ENCODE measurements at regions of chr10 and their contacts with region 1.

Region 1: DNA sequence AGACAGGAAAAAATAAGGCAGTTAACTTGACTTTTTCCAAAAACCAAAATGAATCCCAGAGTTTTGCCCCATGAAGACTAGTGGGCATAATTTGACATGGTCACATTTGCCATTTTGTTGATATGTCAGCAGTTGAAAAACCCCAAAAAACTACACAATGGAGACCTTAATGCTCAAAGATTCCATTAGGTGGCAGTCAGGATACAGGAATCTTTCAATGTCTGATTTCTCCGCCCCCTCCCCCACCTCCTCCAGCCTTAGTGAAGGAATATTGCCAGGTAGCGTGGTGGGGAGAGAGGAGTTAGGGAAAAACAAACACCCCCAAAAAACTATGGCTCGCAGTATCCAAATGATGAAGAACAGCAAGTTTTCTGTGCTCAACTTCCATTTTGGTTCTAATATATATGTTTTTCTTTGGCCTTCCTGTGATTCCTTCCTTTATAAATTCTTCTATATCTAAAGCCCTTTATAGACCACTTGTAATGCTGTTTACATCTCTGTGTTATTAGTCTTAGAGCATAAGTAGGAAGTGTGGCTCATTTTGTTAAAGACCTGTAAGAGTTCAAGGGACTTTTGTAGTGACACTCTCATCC is 6.7 kb upstream of the SMNDC1 start:
- DNase-seq: peak; percentile 74
- H3K4me3 Mint-ChIP-seq: no peak overlapping the region
- H3K27ac Mint-ChIP-seq: no peak overlapping the region
- H3K4me1 Mint-ChIP-seq: peaks cover 34% of the 10 kb centered on the region
- H3K27me3 Mint-ChIP-seq: no peaks in the 10 kb centered on the region

Region 2: GRCh38 chr10:110414563-110415309 is 103.3 kb after region 1 on chr10:
- intact Hi-C with region 1: loop called (anchors 2 kb)
- DNase-seq: peak; percentile 95
- H3K4me3 Mint-ChIP-seq: peak overlapping the region; percentile 39
- H3K27ac Mint-ChIP-seq: peak overlapping the region; percentile 94
- H3K4me1 Mint-ChIP-seq: peaks cover 62% of the 10 kb centered on the region
- H3K27me3 Mint-ChIP-seq: no peaks in the 10 kb centered on the region

Region 3: DNA sequence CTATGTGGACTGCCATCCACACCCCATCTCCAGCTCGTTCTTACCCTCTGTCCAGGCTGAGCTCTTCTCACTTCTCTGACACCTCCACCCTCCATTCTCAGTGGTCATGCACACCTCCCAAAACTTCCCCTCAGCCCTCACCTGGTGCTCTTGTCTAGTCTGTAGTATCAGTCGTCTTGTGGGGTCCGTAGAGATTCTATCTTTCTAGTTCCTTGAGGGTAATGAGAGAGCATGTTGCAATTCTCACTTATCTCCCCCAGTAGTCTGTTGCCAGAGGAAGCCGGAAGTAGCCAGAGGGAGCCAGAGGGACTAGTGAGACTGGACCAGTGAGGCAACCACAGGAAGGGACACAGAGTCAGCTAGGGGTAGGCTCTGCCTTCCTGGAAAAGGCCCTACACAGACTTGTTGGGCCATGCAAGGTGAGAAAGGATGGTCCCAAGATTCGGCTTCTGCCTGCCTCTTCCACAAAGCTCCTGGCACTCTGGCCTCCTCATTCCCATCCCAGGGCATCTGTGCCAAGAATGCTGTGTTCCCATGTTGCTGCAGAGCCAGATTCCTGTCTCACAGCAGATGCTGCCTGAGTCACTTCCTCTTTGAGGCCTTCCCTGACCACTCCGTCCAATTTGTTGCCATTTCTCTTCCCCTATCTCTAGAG is 135.6 kb after region 1 on chr10:
- intact Hi-C with region 1: no loop called
- DNase-seq: no peak
- H3K4me3 Mint-ChIP-seq: no peak overlapping the region
- H3K27ac Mint-ChIP-seq: peak overlapping the region; percentile 3
- H3K4me1 Mint-ChIP-seq: peaks cover 14% of the 10 kb centered on the region
- H3K27me3 Mint-ChIP-seq: peaks cover 14% of the 10 kb centered on the region

Region 4: GRCh38 chr10:110497438-110498086 is 186.1 kb after region 1 on chr10 and contains the start of gene DUSP5:
- intact Hi-C with region 1: loop called (anchors 1 kb)
- DNase-seq: peak; percentile 99
- H3K4me3 Mint-ChIP-seq: peak within 1 kb of the TSS; percentile 99
- H3K27ac Mint-ChIP-seq: peak within 1 kb of the TSS; percentile 92
- H3K4me1 Mint-ChIP-seq: peaks cover 47% of the 10 kb centered on the region
- H3K27me3 Mint-ChIP-seq: no peaks in the 10 kb centered on the region
- total RNA-seq, gene DUSP5: 76.0 and 79.9 TPM in 2 replicates

Region 5: GRCh38 chr10:110535958-110536891 is 224.8 kb after region 1 on chr10:
- intact Hi-C with region 1: loop called (anchors 1 kb)
- DNase-seq: peak; percentile 85
- H3K4me3 Mint-ChIP-seq: peak overlapping the region; percentile 38
- H3K27ac Mint-ChIP-seq: peak overlapping the region; percentile 84
- H3K4me1 Mint-ChIP-seq: peaks cover 55% of the 10 kb centered on the region
- H3K27me3 Mint-ChIP-seq: no peaks in the 10 kb centered on the region

Region 6: DNA sequence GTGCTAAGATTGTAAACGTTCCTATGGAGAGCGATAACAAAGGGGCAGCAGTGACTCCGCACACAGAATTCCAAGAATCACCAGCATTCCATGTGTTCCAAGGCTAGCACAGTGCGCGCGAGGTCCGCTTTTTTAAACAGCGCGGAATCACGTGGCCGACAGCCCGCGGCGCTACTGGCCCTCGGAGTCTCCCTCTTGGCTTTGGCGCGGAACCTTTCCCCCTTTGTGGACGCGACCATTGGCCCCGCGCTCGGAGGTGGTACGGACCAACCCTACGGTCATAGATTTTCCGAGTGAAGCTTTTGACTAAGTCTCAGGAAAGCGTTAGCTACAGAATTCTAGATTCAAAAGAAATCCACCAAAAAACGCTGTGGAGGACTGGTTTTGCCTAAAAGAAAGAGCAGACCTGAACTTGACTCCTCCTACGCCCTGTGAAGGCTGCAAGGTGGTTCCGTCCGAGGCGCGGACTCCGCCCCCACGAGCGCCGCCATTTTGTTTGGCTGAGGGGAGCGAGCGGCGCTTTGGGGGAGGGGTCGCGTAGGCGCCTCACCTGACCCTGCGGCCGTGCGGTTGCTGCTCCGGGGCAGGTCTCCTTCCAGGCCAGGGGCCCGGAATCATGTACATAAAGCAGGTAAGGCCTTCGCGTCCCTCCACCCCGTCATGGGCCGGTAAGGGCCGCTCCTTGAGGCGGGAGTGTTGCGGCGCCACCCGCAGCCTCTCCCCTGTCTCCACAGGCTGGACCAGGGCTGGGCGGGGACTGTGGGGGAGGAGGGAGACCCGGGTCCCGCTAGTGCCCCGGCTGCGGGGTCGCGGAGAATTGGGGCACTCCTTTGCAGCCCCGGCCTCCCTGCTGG is 256.0 kb after region 1 on chr10 and contains the start of gene SMC3:
- intact Hi-C with region 1: loop called (anchors 1 kb)
- DNase-seq: peak; percentile 98
- H3K4me3 Mint-ChIP-seq: peak within 1 kb of the TSS; percentile 97
- H3K27ac Mint-ChIP-seq: peak within 1 kb of the TSS; percentile 98
- H3K4me1 Mint-ChIP-seq: peaks cover 32% of the 10 kb centered on the region
- H3K27me3 Mint-ChIP-seq: peaks cover 21% of the 10 kb centered on the region
- total RNA-seq, gene SMC3: 82.2 and 87.3 TPM in 2 replicates

Region 7: DNA sequence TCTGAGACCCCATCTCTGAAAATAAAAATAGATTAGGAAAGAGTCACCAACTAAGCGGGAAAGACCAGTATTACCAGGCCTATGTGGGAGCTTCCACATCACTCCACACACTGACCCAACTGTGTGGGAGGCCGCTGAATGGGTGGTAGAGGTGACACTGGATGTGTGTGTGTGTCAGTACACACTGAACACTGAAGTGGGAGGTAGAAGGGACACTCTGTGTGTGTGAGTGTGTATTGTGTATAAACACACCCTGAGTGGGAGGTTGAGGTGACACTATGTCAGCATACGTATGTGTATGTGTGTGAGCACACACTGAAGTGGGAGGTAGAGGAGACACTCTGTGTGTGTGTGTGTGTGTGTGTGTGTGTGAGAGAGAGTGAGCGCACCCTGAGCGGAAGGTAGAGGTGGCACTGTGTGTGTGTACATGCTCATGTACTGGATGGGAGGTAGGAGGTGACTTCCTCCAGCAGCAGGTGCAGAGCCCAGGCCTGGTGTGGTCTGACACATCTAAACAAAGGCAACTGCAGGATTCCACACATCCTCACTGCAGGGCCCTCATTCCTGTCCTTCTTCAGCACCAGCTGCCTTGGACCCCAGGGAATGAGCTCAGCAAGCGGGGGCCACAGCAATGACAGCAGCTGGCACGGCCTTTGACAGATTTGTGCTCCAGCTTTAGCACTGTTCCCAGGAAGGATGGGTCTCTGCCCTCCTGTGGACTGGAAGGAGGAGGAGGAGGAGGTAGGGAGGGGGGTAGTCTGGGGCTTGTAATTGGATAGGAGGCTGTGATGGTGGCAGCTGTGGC is 306.2 kb after region 1 on chr10:
- intact Hi-C with region 1: no loop called
- DNase-seq: peak; percentile 54
- H3K4me3 Mint-ChIP-seq: peak overlapping the region; percentile 56
- H3K27ac Mint-ChIP-seq: peak overlapping the region; percentile 90
- H3K4me1 Mint-ChIP-seq: peaks cover 54% of the 10 kb centered on the region
- H3K27me3 Mint-ChIP-seq: no peaks in the 10 kb centered on the region

Region 8: GRCh38 chr10:110681023-110681681 is 369.7 kb after region 1 on chr10:
- intact Hi-C with region 1: loop called (anchors 5 kb)
- DNase-seq: peak; percentile 73
- H3K4me3 Mint-ChIP-seq: no peak overlapping the region
- H3K27ac Mint-ChIP-seq: no peak overlapping the region
- H3K4me1 Mint-ChIP-seq: peaks cover 3% of the 10 kb centered on the region
- H3K27me3 Mint-ChIP-seq: peaks cover 52% of the 10 kb centered on the region